Activated CD4-positive, alpha-beta T cell treated with anti-CD3 and anti-CD28 coated beads, Interleukin-2, amount 10 ng/mL, durations not matched to agents 24 days and 14 days (primary cell): ENCODE measurements at regions of chr17 and their contacts with region 1.

Region 1: GRCh38 chr17:75069783-75070182 is 18.0 kb upstream of the SLC16A5 start:
- DNase-seq: no peak
- H3K4me3 Mint-ChIP-seq: no peak overlapping the region
- H3K27ac Mint-ChIP-seq: no peak overlapping the region
- H3K4me1 Mint-ChIP-seq: peaks cover 28% of the 10 kb centered on the region
- H3K27me3 Mint-ChIP-seq: no peaks in the 10 kb centered on the region

Region 2: DNA sequence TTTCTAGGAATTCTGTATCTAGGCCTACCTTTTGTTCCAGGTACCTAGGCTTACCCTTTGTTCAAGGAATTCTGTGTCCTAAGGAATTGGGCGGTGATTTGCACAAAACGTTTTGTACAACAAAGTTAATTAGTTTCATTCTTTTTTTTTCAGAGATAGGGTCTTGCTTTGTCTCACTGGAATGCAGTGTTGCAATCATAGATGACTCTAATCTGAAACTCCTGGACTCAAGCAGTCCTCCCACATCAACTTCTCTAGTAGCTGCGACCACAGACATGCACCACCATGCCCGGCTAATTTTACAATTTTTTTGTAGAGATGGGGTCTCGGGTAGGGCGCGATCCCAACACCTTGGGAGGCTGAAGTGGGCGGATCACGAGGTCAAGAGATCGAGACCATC is 75.3 kb before region 1 on chr17:
- intact Hi-C with region 1: no loop called
- DNase-seq: no peak
- H3K4me3 Mint-ChIP-seq: no peak overlapping the region
- H3K27ac Mint-ChIP-seq: no peak overlapping the region
- H3K4me1 Mint-ChIP-seq: peaks cover 9% of the 10 kb centered on the region
- H3K27me3 Mint-ChIP-seq: peaks cover 21% of the 10 kb centered on the region

Region 3: DNA sequence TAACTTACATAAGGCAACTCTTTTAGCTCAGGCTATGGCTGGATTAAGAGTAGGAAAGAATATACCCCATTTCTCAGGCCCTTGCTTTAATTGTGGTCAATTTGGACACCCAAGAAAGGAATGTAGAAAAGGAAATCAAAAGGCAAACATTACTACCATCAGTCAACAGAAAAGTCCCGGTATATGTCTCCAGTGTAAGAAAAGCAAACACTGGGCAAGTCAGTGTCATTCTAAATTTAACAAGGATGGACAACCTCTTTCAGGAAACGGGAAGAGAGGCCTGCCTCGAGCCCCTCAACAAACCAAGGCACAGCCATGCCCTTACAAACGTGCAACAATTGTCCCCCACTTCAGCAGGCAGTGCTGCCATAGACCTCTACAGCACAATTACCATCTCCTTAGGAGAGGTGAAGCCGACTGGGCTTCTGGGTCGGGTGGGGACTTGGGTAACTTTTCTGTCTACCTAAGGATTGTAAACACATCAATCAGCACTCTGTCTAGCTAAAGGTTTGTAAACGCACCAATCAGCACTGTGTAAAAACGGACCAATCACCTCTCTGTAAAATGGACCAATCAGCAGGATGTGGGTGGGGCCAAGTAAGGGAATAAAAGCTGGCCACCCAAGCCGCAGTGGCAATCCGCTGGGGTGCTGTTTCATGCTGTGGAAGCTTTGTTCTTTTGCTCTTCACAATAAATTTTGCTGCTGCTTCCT is 44.9 kb before region 1 on chr17:
- intact Hi-C with region 1: no loop called
- DNase-seq: peak; percentile 82
- H3K4me3 Mint-ChIP-seq: peak overlapping the region; percentile 55
- H3K27ac Mint-ChIP-seq: peak overlapping the region; percentile 53
- H3K4me1 Mint-ChIP-seq: peaks cover 13% of the 10 kb centered on the region
- H3K27me3 Mint-ChIP-seq: peaks cover 7% of the 10 kb centered on the region

Region 4: DNA sequence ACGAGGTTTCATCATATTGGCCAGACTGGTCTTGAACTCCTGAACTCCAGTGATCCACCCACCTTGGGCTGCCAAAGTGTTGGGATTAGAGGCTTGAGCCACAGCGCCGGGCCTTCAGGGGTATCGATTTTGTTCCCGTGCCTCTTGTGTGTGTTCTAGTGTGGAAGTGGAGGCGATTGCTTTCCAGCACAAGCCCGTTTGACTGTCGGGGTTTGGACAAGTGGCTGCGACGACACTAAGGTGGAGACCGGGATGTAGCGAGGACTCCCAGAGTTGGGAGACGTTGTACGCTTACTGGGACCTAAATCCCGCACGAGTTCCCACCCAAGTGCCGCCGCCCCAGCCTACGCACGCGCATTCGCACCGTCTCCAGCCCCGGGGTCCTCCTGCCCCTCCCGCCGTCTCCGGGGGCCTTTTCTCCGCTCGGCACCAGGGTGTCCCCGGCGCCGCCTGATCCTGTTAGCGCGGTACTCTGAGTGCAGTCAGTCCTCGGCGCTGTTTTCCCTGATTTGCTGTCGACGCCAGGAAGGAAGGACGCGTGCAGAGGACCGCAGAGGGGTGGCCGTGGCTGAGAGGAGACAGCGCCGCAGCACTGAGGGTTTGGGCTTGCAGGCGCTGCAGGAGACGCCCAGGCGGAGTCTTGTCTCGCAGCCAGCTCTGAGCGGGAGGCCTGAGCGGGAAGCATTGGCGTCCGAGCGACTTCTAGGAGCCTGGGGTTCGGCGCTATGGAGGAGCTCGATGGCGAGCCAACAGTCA is 135.4 kb after region 1 on chr17 and contains the start of gene NUP85:
- intact Hi-C with region 1: loop called (anchors 5 kb)
- DNase-seq: peak; percentile 98
- H3K4me3 Mint-ChIP-seq: peak within 1 kb of the TSS; percentile 97
- H3K27ac Mint-ChIP-seq: peak within 1 kb of the TSS; percentile 99
- H3K4me1 Mint-ChIP-seq: peaks cover 14% of the 10 kb centered on the region
- H3K27me3 Mint-ChIP-seq: no peaks in the 10 kb centered on the region
- total RNA-seq, gene NUP85: 125 and 136 TPM in 2 replicates